Common myeloid progenitor, CD34-positive (primary cell): ENCODE measurements at regions of chr18 and their contacts with region 1.

Region 1: GRCh38 chr18:61901323-61901986 is 8.6 kb upstream of the RNF152 start:
- DNase-seq: peak; percentile 50 to 70 (median 66)
- H3K4me3 ChIP-seq: no peak overlapping the region
- H3K27ac ChIP-seq: no peak overlapping the region
- H3K4me1 ChIP-seq: no peaks in the 10 kb centered on the region
- H3K27me3 ChIP-seq: peaks cover 6 to 21% (median 19%) of the 10 kb centered on the region in 5 experiments

Region 2: DNA sequence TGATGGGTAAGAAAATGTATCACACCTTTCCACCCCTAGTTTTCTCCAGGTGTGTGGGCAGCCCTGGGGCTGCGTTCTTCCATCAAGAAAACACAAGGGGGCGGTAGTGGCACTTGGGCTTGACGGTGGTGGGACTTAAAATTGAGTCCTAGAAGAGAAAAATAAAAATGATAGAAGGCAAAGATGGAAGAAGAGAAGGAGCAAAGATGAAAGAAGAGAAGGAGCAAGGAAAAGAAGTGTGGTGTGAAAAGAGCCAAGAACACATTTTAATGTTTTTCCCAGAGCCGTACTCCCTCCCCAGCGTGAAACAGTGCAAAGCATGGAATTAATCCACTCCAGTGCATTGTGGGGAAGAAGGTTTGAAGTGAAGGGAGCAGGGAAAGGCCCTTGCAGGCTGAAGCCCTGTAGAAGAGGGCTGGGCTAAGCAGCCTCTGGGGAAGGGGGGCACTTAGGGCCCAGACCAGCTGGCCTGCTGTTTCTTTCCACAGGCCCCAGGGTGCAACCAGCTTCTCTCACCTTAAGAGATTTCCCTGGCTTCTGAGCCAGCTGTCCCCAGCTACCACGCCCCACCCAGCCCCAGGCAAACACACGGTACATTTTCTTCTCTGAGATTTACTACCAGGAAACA is 265.4 kb before region 1 on chr18:
- CTCF ChIA-PET with region 1: interaction called, 20 read pairs
- POLR2A ChIA-PET with region 1: no interaction called
- DNase-seq: peak; percentile 44 to 68 (median 62)
- H3K4me3 ChIP-seq: no peak overlapping the region
- H3K27ac ChIP-seq: no peak overlapping the region
- H3K4me1 ChIP-seq: peaks cover 0 to 7% (median 0%) of the 10 kb centered on the region in 4 experiments
- H3K27me3 ChIP-seq: peaks cover 0 to 8% (median 0%) of the 10 kb centered on the region in 5 experiments

Region 3: GRCh38 chr18:61876899-61877298 is 24.6 kb before region 1 on chr18:
- CTCF ChIA-PET with region 1: no interaction called
- POLR2A ChIA-PET with region 1: no interaction called
- DNase-seq: no peak
- H3K4me3 ChIP-seq: no peak overlapping the region
- H3K27ac ChIP-seq: no peak overlapping the region
- H3K4me1 ChIP-seq: no peaks in the 10 kb centered on the region
- H3K27me3 ChIP-seq: peaks cover 0 to 2% (median 0%) of the 10 kb centered on the region in 5 experiments

Region 4: GRCh38 chr18:61972389-61973264 is 71.2 kb after region 1 on chr18:
- CTCF ChIA-PET with region 1: no interaction called
- POLR2A ChIA-PET with region 1: no interaction called
- DNase-seq: peak in 2 of 3 donors; percentile 55 to 67
- H3K4me3 ChIP-seq: no peak overlapping the region
- H3K27ac ChIP-seq: no peak overlapping the region
- H3K4me1 ChIP-seq: peaks cover 0 to 6% (median 1%) of the 10 kb centered on the region in 4 experiments
- H3K27me3 ChIP-seq: no peaks in the 10 kb centered on the region

Region 5: DNA sequence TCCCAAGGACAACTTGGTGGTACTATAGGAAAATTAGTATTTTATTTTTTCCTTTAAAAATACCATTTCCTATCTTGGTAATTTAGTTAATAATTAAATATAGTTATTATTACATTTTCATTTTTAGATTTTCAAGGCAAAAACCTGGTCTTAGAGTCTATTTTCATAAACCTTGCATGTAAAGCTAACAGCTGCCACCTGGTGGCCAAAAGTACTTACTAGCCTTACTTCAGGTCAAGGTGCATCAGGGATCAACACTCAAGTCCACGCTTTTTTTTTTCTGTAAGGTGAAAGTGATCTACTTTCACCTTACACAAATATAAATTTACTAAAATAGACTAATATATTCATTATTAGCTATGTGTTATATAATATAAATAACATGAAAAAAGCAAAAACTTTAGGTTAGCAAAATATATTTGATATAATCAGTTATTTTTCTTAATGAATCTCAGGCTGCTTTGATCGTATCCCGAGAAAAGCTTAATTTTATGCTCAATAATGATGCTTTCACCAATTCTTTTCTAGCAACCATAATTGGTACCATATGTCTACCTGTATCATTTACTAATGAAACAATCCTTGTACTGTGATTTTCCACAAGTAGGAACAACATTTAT is 348.1 kb after region 1 on chr18:
- CTCF ChIA-PET with region 1: no interaction called
- POLR2A ChIA-PET with region 1: no interaction called
- DNase-seq: peak; percentile 88 to 92 (median 89)
- H3K4me3 ChIP-seq: no peak overlapping the region
- H3K27ac ChIP-seq: no peak overlapping the region
- H3K4me1 ChIP-seq: no peaks in the 10 kb centered on the region
- H3K27me3 ChIP-seq: no peaks in the 10 kb centered on the region